ENCODE measurements at regions of chr13 and their contacts with region 1.

Region 1: GRCh38 chr13:98653463-98653985 is 76.6 kb upstream of the STK24 start:
- DNase-seq: peak; percentile 79
- ATAC-seq: peak; percentile 94
- H3K4me3 Mint-ChIP-seq: no peak overlapping the region
- H3K27ac Mint-ChIP-seq: no peak overlapping the region
- H3K4me1 Mint-ChIP-seq: peaks cover 2% of the 10 kb centered on the region
- H3K27me3 Mint-ChIP-seq: no peaks in the 10 kb centered on the region

Region 2: GRCh38 chr13:98372876-98373275 is 280.6 kb before region 1 on chr13:
- CTCF ChIA-PET with region 1: no interaction called
- DNase-seq: no peak
- ATAC-seq: no peak
- H3K4me3 Mint-ChIP-seq: no peak overlapping the region
- H3K27ac Mint-ChIP-seq: no peak overlapping the region
- H3K4me1 Mint-ChIP-seq: no peaks in the 10 kb centered on the region
- H3K27me3 Mint-ChIP-seq: no peaks in the 10 kb centered on the region

Region 3: GRCh38 chr13:98445340-98446233 is 207.9 kb before region 1 on chr13:
- CTCF ChIA-PET with region 1: interaction called, 124 read pairs
- DNase-seq: peak; percentile 84
- ATAC-seq: peak; percentile 94
- H3K4me3 Mint-ChIP-seq: no peak overlapping the region
- H3K27ac Mint-ChIP-seq: peak overlapping the region; percentile 84
- H3K4me1 Mint-ChIP-seq: peaks cover 15% of the 10 kb centered on the region
- H3K27me3 Mint-ChIP-seq: no peaks in the 10 kb centered on the region

Region 4: DNA sequence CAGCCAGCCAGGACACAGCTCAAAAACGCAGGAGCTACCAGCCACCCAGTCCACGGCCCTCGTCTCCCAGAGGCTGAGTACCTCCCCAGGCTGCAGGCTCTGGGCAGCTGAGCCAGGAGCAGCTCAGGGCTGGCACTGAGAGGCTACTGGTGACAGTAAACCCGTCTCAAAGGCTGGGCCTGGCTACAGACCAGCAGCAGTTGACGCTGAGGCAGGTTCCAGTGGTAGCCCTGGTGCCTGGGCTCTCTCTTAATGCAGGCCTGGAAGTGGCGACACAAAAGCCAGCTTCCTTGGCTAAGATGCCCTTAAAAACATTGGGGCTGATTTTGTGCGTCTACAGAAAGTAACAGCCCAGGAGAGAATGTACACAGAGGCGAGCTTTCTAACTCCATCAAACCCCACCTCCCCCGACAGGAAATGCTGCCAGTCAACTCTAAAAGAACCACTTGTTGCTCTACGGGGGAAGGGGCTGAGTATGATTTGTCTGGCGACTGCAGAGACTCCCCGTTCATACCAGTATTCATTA is 202.9 kb before region 1 on chr13:
- CTCF ChIA-PET with region 1: interaction called, 124 read pairs
- DNase-seq: no peak
- ATAC-seq: peak; percentile 31
- H3K4me3 Mint-ChIP-seq: no peak overlapping the region
- H3K27ac Mint-ChIP-seq: peak overlapping the region; percentile 11
- H3K4me1 Mint-ChIP-seq: peaks cover 17% of the 10 kb centered on the region
- H3K27me3 Mint-ChIP-seq: no peaks in the 10 kb centered on the region

Region 5: GRCh38 chr13:98528663-98529570 is 124.6 kb before region 1 on chr13:
- CTCF ChIA-PET with region 1: interaction called, 12 read pairs
- DNase-seq: no peak
- ATAC-seq: peak; percentile 70
- H3K4me3 Mint-ChIP-seq: peak overlapping the region; percentile 29
- H3K27ac Mint-ChIP-seq: peak overlapping the region; percentile 73
- H3K4me1 Mint-ChIP-seq: peaks cover 82% of the 10 kb centered on the region
- H3K27me3 Mint-ChIP-seq: no peaks in the 10 kb centered on the region

Region 6: GRCh38 chr13:98664924-98665637 is 11.6 kb after region 1 on chr13:
- CTCF ChIA-PET with region 1: interaction called, 11 read pairs
- DNase-seq: no peak
- ATAC-seq: no peak
- H3K4me3 Mint-ChIP-seq: no peak overlapping the region
- H3K27ac Mint-ChIP-seq: no peak overlapping the region
- H3K4me1 Mint-ChIP-seq: peaks cover 11% of the 10 kb centered on the region
- H3K27me3 Mint-ChIP-seq: peaks cover 25% of the 10 kb centered on the region

Region 7: GRCh38 chr13:98672944-98673545 is 19.5 kb after region 1 on chr13:
- CTCF ChIA-PET with region 1: interaction called, 12 read pairs
- DNase-seq: peak; percentile 63
- ATAC-seq: peak; percentile 80
- H3K4me3 Mint-ChIP-seq: no peak overlapping the region
- H3K27ac Mint-ChIP-seq: no peak overlapping the region
- H3K4me1 Mint-ChIP-seq: peaks cover 12% of the 10 kb centered on the region
- H3K27me3 Mint-ChIP-seq: peaks cover 11% of the 10 kb centered on the region